ENCODE measurements at regions of chr17 and their contacts with region 1.

Region 1: DNA sequence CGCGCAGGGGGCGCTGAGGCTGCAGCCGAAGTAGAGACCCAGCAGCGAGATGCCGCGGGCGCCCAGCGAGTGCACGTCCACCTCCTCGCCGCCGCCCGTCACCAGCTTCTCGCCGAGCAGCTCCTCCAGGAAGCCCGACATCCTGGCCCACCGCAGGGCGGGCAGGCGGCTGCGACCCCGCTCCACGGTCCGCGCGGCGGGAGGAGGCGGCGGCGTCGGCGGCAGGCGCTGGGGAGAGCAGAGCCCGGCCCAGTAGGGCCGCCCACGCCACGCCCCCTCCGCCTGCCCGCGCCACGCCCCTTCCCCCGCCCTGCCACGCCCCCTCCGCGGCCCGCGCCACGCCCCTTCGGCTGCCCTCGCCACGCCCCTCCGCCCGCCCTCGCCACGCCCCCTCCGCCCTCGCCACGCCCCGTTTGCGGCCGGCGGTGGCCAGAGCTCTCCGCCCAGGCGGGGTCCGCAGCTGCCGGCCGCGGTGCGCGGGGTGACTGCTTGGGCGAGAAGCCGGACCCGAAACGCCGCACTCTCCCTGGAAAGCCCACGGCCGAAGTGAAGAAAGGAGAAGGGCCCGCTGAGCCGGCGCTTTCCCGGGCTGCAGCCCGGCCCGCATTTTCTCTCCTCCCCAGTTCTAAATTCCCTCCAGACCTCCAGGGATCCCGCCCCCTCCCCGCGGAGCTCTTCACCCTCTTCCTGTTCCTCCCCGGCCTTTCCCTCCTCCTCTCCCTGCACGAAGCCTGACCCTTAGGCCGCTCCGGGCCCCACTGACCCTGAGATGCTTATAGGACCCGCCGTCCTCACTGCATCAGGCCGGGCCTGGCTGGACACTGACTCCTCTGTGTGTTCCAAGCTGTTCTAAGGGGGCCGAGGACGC is at the start of gene NXN:
- DNase-seq: peak; percentile 89
- H3K4me3 ChIP-seq: peak within 1 kb of the TSS; percentile 46
- H3K27ac ChIP-seq: peak within 1 kb of the TSS; percentile 47
- H3K4me1 ChIP-seq: no peaks in the 10 kb centered on the region
- H3K27me3 ChIP-seq: peaks cover 18% of the 10 kb centered on the region
- CTCF ChIP-seq: no peak
- total RNA-seq, gene NXN: 2.6 to 16.3 TPM

Region 2: DNA sequence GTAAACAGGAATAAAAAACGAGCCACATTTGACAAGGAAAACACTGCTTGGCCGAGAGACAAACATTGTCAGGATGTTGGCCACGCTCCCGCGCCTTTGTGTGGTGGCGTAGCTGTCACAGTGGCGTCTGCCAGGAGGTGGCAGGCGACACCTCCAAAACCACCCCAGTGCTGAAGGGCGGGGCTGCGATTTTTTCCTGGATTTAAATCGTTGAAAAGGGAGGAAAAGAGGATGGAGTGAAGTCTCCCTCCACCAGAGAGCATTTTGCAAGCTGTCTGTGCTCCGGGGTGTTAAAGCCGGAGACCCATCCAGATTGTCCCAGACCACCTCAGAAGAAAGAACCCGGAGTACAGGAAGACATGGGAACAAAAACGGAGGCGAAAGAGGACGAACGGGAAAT is 184.9 kb before region 1 on chr17:
- intact Hi-C with region 1: loop called (anchors 2 kb)
- DNase-seq: peak; percentile 77
- H3K4me3 ChIP-seq: no peak overlapping the region
- H3K27ac ChIP-seq: peak overlapping the region; percentile 22
- H3K4me1 ChIP-seq: no peaks in the 10 kb centered on the region
- H3K27me3 ChIP-seq: no peaks in the 10 kb centered on the region
- CTCF ChIP-seq: peak; percentile 77

Region 3: DNA sequence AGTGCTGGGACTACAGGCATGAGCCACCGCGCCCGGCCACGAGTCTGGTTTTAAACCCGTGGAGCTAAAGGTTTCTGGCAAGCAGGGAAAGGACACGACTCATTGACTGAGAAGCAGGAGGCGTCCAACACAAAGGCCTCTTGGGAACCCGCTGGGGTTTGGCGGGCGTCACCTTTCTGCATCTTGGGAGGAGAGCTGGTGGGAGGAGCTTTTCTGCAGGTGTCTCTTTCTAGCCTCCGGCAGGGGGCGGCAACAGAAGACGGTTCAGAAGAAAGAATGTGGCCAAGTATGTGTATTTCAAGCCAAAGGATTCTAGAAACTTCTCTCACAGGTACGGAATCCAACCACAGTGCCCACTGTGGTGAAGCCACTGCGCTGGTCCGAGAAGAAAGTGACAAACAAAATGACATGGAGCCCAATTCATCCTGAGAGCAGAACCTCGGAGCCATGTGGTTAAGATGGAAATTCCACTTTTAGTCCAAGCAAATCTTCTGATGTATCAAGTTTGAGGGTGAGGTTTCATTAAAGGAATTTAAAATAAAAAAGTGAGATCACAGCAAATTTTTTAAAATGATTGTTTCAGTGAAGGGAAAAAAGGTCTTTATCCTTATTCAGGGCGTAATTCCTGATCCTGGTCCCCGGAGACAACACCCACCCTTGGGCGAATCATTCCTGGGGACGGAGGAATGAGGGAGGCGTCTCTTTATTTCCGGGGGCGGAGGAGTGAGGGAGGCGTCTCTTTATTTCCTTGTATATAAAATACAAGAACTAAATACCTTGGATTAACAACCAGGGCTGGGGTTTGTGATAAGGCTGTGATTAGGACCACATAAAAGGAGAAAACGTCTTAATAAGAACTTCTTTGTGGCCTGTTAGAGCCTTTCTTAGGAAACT is 100.0 kb before region 1 on chr17:
- intact Hi-C with region 1: loop called (anchors 10 kb)
- DNase-seq: peak; percentile 55
- H3K4me3 ChIP-seq: no peak overlapping the region
- H3K27ac ChIP-seq: peak overlapping the region; percentile 33
- H3K4me1 ChIP-seq: no peaks in the 10 kb centered on the region
- H3K27me3 ChIP-seq: no peaks in the 10 kb centered on the region
- CTCF ChIP-seq: peak; percentile 49

Region 4: DNA sequence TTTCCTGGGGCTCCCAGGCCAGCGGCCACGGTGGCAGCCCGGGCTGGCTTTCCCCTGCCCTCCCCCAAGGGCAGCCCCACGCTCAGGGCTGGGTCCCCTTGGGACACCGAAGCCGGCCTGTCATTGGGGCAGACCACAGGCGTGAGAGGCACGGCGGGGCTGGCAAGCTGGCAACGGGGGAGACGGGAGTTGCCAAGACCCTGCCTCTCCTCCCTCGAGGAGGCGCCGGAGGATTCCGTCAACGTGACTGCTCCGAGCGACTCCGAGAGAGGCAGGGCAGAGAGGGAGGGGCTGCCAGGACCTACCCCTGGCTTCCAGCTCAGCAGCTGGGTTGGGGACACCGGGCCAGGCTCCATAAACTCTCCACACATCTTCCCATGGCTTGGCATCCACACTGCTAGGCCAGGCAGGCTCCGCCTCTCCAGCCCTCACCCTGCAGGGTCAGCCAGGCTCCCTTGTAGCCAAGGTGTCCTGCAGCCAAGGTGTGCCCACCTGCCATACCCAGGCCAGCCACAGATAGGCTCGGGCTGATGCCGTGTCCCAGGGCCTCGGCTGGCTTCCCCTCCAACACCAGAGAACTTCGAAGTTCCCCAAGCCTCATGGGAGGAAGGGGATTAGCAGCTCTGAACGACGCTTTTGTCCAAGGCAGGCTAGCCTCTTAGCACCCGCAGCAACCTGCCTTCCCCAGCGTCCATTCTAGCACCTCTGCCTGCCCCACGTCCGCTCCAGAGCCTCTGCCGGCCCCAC is 42.7 kb after region 1 on chr17:
- intact Hi-C with region 1: no loop called
- DNase-seq: no peak
- H3K4me3 ChIP-seq: no peak overlapping the region
- H3K27ac ChIP-seq: no peak overlapping the region
- H3K4me1 ChIP-seq: no peaks in the 10 kb centered on the region
- H3K27me3 ChIP-seq: no peaks in the 10 kb centered on the region
- CTCF ChIP-seq: no peak

Measured in colonic mucosa (tissue), 4 donors.